ENCODE measurements at regions of chr4 and their contacts with region 1.

Region 1: GRCh38 chr4:10063544-10064300 is 42.4 kb upstream of the SLC2A9 start:
- DNase-seq: no peak

Region 2: GRCh38 chr4:9691238-9692065 is 372.3 kb before region 1 on chr4:
- intact Hi-C with region 1: loop called (anchors 10 kb)
- DNase-seq: peak; percentile 97

Region 3: GRCh38 chr4:9762823-9763475 is 300.8 kb before region 1 on chr4:
- intact Hi-C with region 1: loop called (anchors 5 kb)
- DNase-seq: no peak

Region 4: DNA sequence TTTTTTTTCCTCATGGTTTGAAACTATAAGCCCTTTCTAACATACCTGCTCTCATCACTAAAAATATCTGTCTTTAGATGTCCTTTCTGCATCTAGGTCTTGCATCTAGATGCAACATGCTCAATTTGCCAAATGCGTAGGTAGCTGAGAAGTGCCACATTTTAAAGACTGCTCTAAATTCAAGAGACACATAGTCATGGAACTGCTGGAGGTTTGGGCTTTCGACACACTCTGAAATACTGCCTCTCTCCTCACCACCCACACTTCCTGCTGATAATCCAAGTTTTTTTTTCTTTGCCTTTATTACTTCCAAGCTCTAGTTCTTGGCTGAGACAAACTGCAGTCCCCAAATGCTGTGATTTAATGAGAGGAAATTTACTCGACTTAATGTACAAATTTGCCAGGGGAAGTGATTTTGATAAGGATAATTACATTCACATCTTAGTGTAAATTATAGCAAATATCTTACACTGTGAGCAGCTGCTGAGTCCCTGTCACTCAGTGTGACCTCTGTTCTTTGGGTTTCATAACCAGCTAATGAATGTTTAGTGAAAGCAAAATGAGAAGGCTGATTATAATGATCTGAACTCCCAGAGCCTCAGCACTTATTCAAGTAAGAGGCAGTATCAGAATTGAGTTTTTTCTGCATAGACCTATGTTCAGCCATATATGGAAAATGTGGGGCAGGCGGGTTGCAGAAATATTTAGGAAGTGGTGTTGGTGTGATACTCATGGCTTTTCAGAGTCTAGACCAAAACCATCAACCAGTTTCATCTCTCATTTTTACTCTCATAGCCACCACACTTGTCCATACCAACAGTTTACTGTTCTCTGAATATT is 251.0 kb before region 1 on chr4:
- intact Hi-C with region 1: no loop called
- DNase-seq: no peak

Region 5: GRCh38 chr4:9898596-9899305 is 165.0 kb before region 1 on chr4:
- intact Hi-C with region 1: loop called (anchors 10 kb)
- DNase-seq: no peak

Region 6: GRCh38 chr4:10115851-10116579 is 52.3 kb after region 1 on chr4:
- intact Hi-C with region 1: no loop called
- DNase-seq: peak; percentile 83

Region 7: GRCh38 chr4:10180927-10181782 is 117.4 kb after region 1 on chr4:
- intact Hi-C with region 1: no loop called
- DNase-seq: peak; percentile 79

Measured in cardiac septum (tissue), 1 donor.